ENCODE measurements at regions of chr11 and their contacts with region 1.

Region 1: GRCh38 chr11:16820324-16821092 is 82.1 kb downstream of the C11orf58 start:
- DNase-seq: peak; percentile 42
- ATAC-seq: peak; percentile 97
- H3K4me3 ChIP-seq: no peak overlapping the region
- H3K27ac ChIP-seq: no peak overlapping the region
- H3K4me1 ChIP-seq: peaks cover 3% of the 10 kb centered on the region; the same call in 1 of the 2 replicates
- H3K27me3 ChIP-seq: no peaks in the 10 kb centered on the region
- CTCF ChIP-seq: peak; percentile 83 to 92 (median 89)
- EP300 ChIP-seq: no peak
- POLR2A ChIP-seq: no peak
- RAD21 ChIP-seq: peak; percentile 81

Region 2: GRCh38 chr11:16785520-16786128 is 34.9 kb before region 1 on chr11:
- CTCF ChIA-PET with region 1: interaction called, 26 read pairs
- POLR2A ChIA-PET with region 1: no interaction called
- RAD21 ChIA-PET with region 1: interaction called, 6 read pairs
- SMC1A ChIA-PET with region 1: interaction called, 8 read pairs
- in situ Hi-C with region 1: no loop called
- intact Hi-C with region 1: no loop called
- DNase-seq: peak; percentile 17
- ATAC-seq: peak; percentile 88
- H3K4me3 ChIP-seq: no peak overlapping the region
- H3K27ac ChIP-seq: no peak overlapping the region
- H3K4me1 ChIP-seq: no peaks in the 10 kb centered on the region
- H3K27me3 ChIP-seq: no peaks in the 10 kb centered on the region; a peak in 1 of 4 replicates
- CTCF ChIP-seq: peak; percentile 86 to 90 (median 88)
- EP300 ChIP-seq: no peak
- POLR2A ChIP-seq: no peak
- RAD21 ChIP-seq: peak; percentile 80

Region 3: GRCh38 chr11:16831316-16832192 is 11.0 kb after region 1 on chr11:
- CTCF ChIA-PET with region 1: interaction called, 27 read pairs
- POLR2A ChIA-PET with region 1: no interaction called
- RAD21 ChIA-PET with region 1: interaction called, 4 read pairs
- SMC1A ChIA-PET with region 1: interaction called, 8 read pairs
- in situ Hi-C with region 1: no loop called
- intact Hi-C with region 1: no loop called
- DNase-seq: no peak
- ATAC-seq: no peak
- H3K4me3 ChIP-seq: no peak overlapping the region
- H3K27ac ChIP-seq: no peak overlapping the region
- H3K4me1 ChIP-seq: no peaks in the 10 kb centered on the region
- H3K27me3 ChIP-seq: no peaks in the 10 kb centered on the region
- CTCF ChIP-seq: no peak
- EP300 ChIP-seq: no peak
- POLR2A ChIP-seq: no peak
- RAD21 ChIP-seq: no peak

Region 4: GRCh38 chr11:16881074-16881709 is 60.7 kb after region 1 on chr11:
- CTCF ChIA-PET with region 1: interaction called, 28 read pairs
- POLR2A ChIA-PET with region 1: no interaction called
- RAD21 ChIA-PET with region 1: interaction called, 4 read pairs
- SMC1A ChIA-PET with region 1: interaction called, 10 read pairs
- in situ Hi-C with region 1: no loop called
- intact Hi-C with region 1: no loop called
- DNase-seq: no peak
- ATAC-seq: peak; percentile 72
- H3K4me3 ChIP-seq: no peak overlapping the region
- H3K27ac ChIP-seq: no peak overlapping the region
- H3K4me1 ChIP-seq: peaks cover 3% of the 10 kb centered on the region; the same call in 1 of the 2 replicates
- H3K27me3 ChIP-seq: no peaks in the 10 kb centered on the region; a peak in 1 of 4 replicates
- CTCF ChIP-seq: peak in 1 of 3 experiments; percentile 21; a peak in 2 of 6 replicates
- EP300 ChIP-seq: no peak
- POLR2A ChIP-seq: no peak
- RAD21 ChIP-seq: peak; percentile 29

Region 5: GRCh38 chr11:16909359-16910035 is 89.0 kb after region 1 on chr11:
- CTCF ChIA-PET with region 1: interaction called, 15 read pairs
- POLR2A ChIA-PET with region 1: no interaction called
- RAD21 ChIA-PET with region 1: interaction called, 12 read pairs
- SMC1A ChIA-PET with region 1: interaction called, 7 read pairs
- in situ Hi-C with region 1: no loop called
- intact Hi-C with region 1: no loop called
- DNase-seq: peak; percentile 53
- ATAC-seq: peak; percentile 83
- H3K4me3 ChIP-seq: no peak overlapping the region
- H3K27ac ChIP-seq: peak overlapping the region; percentile 45
- H3K4me1 ChIP-seq: peaks cover 30% of the 10 kb centered on the region
- H3K27me3 ChIP-seq: no peaks in the 10 kb centered on the region
- CTCF ChIP-seq: no peak
- EP300 ChIP-seq: no peak
- POLR2A ChIP-seq: no peak
- RAD21 ChIP-seq: no peak

Region 6: GRCh38 chr11:16945671-16946469 is 125.4 kb after region 1 on chr11:
- CTCF ChIA-PET with region 1: interaction called, 16 read pairs
- POLR2A ChIA-PET with region 1: no interaction called
- RAD21 ChIA-PET with region 1: interaction called, 17 read pairs
- SMC1A ChIA-PET with region 1: interaction called, 7 read pairs
- in situ Hi-C with region 1: no loop called
- intact Hi-C with region 1: no loop called
- DNase-seq: peak; percentile 61
- ATAC-seq: peak; percentile 92
- H3K4me3 ChIP-seq: peak overlapping the region; percentile 39; the same call in 1 of the 2 replicates
- H3K27ac ChIP-seq: peak overlapping the region; percentile 64
- H3K4me1 ChIP-seq: peaks cover 12% of the 10 kb centered on the region
- H3K27me3 ChIP-seq: no peaks in the 10 kb centered on the region
- CTCF ChIP-seq: peak; percentile 86 to 89 (median 88)
- EP300 ChIP-seq: no peak
- POLR2A ChIP-seq: no peak
- RAD21 ChIP-seq: peak; percentile 97

Measured in GM12878 (cell line).